Activated CD8-positive, alpha-beta memory T cell treated with anti-CD3 and anti-CD28 coated beads, Interleukin-2, amount 10 ng/mL, durations not matched to agents 7 days and 5 days (primary cell): ENCODE measurements at regions of chr11 and their contacts with region 1.

Region 1: DNA sequence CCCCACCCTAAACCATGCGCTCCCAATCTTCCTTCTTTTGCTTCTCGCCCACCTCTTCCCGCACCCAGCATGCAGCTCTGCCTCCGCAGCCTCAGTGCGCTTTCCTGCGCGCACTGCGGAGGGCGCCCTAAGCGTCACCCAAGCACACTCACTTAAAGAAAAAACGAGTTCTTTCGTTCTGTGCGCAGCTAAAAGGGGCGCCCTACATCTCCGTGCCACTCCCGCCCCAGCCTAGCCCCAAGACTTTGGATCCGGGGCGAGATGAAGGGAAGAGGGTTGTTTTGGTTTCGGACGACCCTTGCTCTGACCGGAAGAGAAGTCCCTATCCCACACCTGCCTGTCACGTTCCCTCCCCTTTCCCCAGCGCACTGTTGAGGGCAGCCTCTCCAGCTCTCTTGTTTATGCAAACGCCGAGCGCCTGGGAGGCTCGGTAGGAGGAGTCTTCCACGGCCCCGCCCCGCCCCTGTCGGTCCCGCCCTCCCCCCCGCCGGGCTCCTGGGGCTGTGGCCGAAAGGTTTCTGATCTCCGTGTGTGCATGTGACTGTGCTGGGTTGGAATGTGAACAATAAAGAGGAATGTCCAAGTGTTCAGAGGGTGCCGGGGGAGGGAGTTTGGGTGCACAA is 5.3 kb downstream of the VSIG2 start:
- DNase-seq: peak; percentile 85
- ATAC-seq: peak; percentile 92
- H3K4me3 Mint-ChIP-seq: peak overlapping the region; percentile 89
- H3K27ac Mint-ChIP-seq: peak overlapping the region; percentile 89
- H3K4me1 Mint-ChIP-seq: peaks cover 14% of the 10 kb centered on the region
- H3K27me3 Mint-ChIP-seq: peaks cover 26% of the 10 kb centered on the region

Region 2: DNA sequence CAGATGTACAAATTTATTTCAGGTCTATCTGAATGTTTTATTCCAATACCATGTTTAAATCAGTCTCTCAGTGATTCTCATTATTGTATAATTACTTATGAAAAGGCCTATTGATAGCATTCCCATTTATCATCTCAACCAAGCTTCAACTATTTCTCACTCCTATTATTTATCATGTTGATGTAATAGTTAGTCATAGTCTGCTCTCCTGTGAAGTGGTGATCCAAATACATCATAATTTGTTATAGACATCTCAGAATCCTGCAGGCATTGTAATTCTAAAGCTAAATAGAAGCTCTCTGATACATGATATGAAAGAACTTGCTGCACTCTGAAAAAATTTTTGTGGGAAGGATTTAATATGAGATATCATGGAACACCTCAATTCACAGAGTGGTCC is 527.6 kb before region 1 on chr11:
- CTCF ChIA-PET with region 1: no interaction called
- DNase-seq: no peak
- ATAC-seq: no peak
- H3K4me3 Mint-ChIP-seq: no peak overlapping the region
- H3K27ac Mint-ChIP-seq: no peak overlapping the region
- H3K4me1 Mint-ChIP-seq: no peaks in the 10 kb centered on the region
- H3K27me3 Mint-ChIP-seq: peaks cover 3% of the 10 kb centered on the region

Region 3: GRCh38 chr11:124536520-124536919 is 210.2 kb before region 1 on chr11:
- CTCF ChIA-PET with region 1: no interaction called
- DNase-seq: no peak
- ATAC-seq: no peak
- H3K4me3 Mint-ChIP-seq: no peak overlapping the region
- H3K27ac Mint-ChIP-seq: no peak overlapping the region
- H3K4me1 Mint-ChIP-seq: no peaks in the 10 kb centered on the region
- H3K27me3 Mint-ChIP-seq: peaks cover 5% of the 10 kb centered on the region

Region 4: GRCh38 chr11:124758317-124759203 is 11.8 kb after region 1 on chr11:
- CTCF ChIA-PET with region 1: interaction called, 53 read pairs
- DNase-seq: peak; percentile 82
- ATAC-seq: peak; percentile 64
- H3K4me3 Mint-ChIP-seq: no peak overlapping the region
- H3K27ac Mint-ChIP-seq: no peak overlapping the region
- H3K4me1 Mint-ChIP-seq: peaks cover 19% of the 10 kb centered on the region
- H3K27me3 Mint-ChIP-seq: peaks cover 53% of the 10 kb centered on the region

Region 5: GRCh38 chr11:124769801-124770639 is 23.3 kb after region 1 on chr11:
- CTCF ChIA-PET with region 1: interaction called, 11 read pairs
- DNase-seq: no peak
- ATAC-seq: no peak
- H3K4me3 Mint-ChIP-seq: no peak overlapping the region
- H3K27ac Mint-ChIP-seq: no peak overlapping the region
- H3K4me1 Mint-ChIP-seq: no peaks in the 10 kb centered on the region
- H3K27me3 Mint-ChIP-seq: no peaks in the 10 kb centered on the region

Region 6: GRCh38 chr11:124793466-124794278 is 46.9 kb after region 1 on chr11:
- CTCF ChIA-PET with region 1: interaction called, 37 read pairs
- DNase-seq: no peak
- ATAC-seq: peak; percentile 57
- H3K4me3 Mint-ChIP-seq: no peak overlapping the region
- H3K27ac Mint-ChIP-seq: no peak overlapping the region
- H3K4me1 Mint-ChIP-seq: peaks cover 36% of the 10 kb centered on the region
- H3K27me3 Mint-ChIP-seq: no peaks in the 10 kb centered on the region

Region 7: GRCh38 chr11:124800226-124800929 is 53.6 kb after region 1 on chr11 and contains the start of gene MSANTD2:
- CTCF ChIA-PET with region 1: interaction called, 37 read pairs
- DNase-seq: peak; percentile 86
- ATAC-seq: peak; percentile 91
- H3K4me3 Mint-ChIP-seq: peak within 1 kb of the TSS; percentile 82
- H3K27ac Mint-ChIP-seq: peak within 1 kb of the TSS; percentile 90
- H3K4me1 Mint-ChIP-seq: peaks cover 25% of the 10 kb centered on the region
- H3K27me3 Mint-ChIP-seq: peaks cover 2% of the 10 kb centered on the region
- total RNA-seq, gene MSANTD2: 8.5 to 10.2 TPM

Region 8: DNA sequence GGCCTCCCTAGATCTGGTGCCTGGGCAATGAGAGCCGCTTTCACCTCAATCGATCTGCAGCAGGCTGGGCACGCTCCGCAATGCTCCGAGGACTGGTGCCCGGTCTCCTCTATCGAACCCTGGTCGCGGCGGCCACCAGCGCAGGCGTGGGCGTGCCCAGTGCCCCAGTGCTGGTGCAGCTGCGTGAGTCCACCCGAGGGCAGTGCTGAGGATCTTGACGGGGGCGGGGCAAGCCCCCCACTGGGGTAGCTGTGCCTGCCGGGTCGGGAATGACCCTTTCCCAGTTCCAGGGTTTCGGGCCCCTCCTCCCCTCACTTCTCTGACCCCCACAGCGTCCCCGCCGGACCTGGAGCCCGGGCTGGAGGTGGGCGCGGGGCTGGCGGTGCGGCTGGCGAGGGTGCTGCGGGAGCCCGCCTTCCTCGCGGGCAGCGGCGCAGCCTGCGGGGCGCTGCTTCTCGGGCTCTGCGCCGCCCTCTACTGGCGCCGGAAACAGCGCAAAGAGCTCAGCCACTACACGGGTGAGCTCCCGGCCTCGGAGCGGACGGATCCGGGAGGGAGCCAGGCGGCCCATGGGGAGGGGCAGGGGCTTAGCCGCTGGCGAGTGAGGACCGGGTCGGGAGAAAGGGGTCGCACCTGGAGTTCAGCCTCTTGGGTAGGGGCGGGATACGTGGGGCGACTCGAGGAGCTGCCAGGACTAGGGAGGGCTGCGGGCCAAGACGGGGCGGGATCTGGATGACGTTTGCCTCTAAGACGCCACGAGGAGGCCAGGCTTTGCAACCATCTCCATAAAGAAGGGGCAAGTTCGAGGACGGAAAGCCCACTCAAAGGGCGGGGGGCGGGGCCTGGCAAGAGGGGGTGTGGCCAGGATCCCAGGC is 129.4 kb after region 1 on chr11:
- CTCF ChIA-PET with region 1: interaction called, 10 read pairs
- DNase-seq: peak; percentile 87
- ATAC-seq: peak; percentile 96
- H3K4me3 Mint-ChIP-seq: peak overlapping the region; percentile 77
- H3K27ac Mint-ChIP-seq: peak overlapping the region; percentile 85
- H3K4me1 Mint-ChIP-seq: peaks cover 15% of the 10 kb centered on the region
- H3K27me3 Mint-ChIP-seq: peaks cover 31% of the 10 kb centered on the region